Heart left ventricle (tissue), 16 donors: ENCODE measurements at regions of chr5 and their contacts with region 1.

Region 1: DNA sequence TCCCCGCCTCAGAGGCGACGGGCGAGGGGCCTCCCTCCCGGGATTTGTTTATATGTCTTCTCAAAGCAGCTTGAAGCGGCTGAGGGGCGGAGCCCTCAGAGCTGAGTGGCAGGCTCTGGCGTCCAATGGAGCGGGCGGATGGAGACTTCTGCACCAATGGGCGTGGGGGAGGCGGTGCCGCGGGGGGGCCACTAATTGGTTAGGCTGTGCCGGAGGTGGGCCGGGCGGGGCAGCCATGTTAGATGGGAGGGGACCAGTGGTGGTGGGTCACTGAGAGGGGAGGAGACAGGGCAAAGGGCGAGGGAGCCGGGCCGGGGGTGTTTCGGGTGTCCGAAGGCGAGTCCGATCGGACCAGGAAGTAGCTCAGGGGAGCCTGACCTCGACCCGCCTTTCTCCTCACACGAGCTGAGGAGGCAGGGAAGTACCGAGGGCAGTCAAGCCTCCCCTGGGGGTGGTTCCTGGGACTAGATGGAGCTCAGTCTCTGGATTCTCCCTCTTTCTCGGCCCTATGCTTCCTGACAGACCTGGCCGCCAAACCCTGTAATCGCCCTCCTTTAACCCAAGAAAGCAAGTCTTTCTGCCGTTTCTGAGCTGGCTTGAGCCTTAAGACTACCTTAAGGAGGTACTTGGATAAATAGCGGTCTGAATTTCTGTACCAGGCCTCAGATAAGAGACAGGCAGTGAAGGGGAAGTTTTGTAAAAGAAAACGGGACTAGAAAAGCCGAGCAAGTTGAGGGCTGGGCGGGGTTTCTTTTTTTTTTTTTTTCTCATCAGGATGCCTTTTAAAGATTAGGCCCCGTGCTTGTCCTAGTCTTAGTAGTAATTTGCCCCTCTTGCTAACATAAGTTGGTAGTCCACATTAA is 1.1 kb downstream of the CREBRF start:
- DNase-seq: peak; percentile 98 to 100 (median 99)
- ATAC-seq: peak; percentile 97 to 98 (median 98)
- H3K4me3 ChIP-seq: peak overlapping the region; percentile 68 to 100 (median 97)
- H3K27ac ChIP-seq: peak overlapping the region; percentile 86 to 99 (median 96)
- H3K4me1 ChIP-seq: peaks cover 6 to 46% (median 35%) of the 10 kb centered on the region in 12 donors
- H3K27me3 ChIP-seq: no peaks in the 10 kb centered on the region
- CTCF ChIP-seq: peak in 3 of 12 donors; percentile 6 to 38 (median 25)
- POLR2A ChIP-seq: peak in 1 of 2 donors; percentile 59

Region 2: DNA sequence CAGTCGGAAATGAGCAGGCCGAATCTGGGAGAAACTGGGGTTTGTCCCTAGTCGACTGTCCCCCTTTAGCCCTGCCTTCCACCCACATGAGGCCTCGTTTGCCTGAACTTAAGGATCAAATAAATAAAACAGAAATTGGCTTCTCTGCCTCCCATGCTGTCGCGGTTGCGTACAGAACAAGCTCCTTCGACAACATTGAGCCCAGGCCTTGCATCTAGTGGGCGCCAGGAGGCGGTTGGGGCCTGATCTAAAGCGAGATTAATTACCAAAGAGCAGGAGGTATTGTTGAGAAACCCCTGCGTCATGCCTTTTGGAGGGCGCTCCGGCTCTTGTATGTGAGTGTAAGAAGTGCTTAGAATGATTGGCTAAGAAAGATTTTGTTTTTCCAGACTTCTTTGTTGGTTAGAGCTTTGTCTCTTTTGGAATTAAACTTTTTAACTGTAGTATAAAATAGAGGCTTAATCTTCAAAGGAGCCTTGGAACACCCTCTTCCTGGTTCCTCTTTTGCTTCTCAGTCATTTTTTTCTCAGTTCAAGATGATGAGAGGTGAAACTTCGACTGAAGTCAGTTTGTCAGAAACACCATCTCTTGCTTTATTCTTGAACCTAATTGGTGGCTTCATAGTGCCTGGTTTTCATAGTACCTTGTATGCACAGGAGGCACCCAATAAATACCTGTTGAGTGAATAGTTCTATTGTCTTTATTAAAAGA is 72.9 kb before region 1 on chr5:
- intact Hi-C with region 1: loop called in 4 of 10 experiments (anchors 2 to 5 kb)
- DNase-seq: peak in 4 of 5 donors; percentile 51 to 66 (median 56)
- ATAC-seq: peak; percentile 13 to 72 (median 60)
- H3K4me3 ChIP-seq: peak overlapping the region; percentile 71 to 99 (median 88)
- H3K27ac ChIP-seq: peak overlapping the region; percentile 81 to 98 (median 94)
- H3K4me1 ChIP-seq: peaks cover 0 to 53% (median 16%) of the 10 kb centered on the region in 12 donors
- H3K27me3 ChIP-seq: no peaks in the 10 kb centered on the region
- CTCF ChIP-seq: peak in 10 of 12 donors; percentile 6 to 44 (median 30)
- POLR2A ChIP-seq: no peak

Region 3: GRCh38 chr5:173010547-173011464 is 46.5 kb before region 1 on chr5:
- intact Hi-C with region 1: loop called in 2 of 10 experiments (anchors 5 kb)
- DNase-seq: peak; percentile 63 to 72 (median 70)
- ATAC-seq: peak; percentile 82 to 92 (median 88)
- H3K4me3 ChIP-seq: no peak overlapping the region
- H3K27ac ChIP-seq: peak overlapping the region in 3 of 12 donors; percentile 26 to 68 (median 44)
- H3K4me1 ChIP-seq: peaks cover 0 to 90% (median 32%) of the 10 kb centered on the region in 12 donors
- H3K27me3 ChIP-seq: no peaks in the 10 kb centered on the region
- CTCF ChIP-seq: peak; percentile 43 to 75 (median 64)
- POLR2A ChIP-seq: no peak

Region 4: DNA sequence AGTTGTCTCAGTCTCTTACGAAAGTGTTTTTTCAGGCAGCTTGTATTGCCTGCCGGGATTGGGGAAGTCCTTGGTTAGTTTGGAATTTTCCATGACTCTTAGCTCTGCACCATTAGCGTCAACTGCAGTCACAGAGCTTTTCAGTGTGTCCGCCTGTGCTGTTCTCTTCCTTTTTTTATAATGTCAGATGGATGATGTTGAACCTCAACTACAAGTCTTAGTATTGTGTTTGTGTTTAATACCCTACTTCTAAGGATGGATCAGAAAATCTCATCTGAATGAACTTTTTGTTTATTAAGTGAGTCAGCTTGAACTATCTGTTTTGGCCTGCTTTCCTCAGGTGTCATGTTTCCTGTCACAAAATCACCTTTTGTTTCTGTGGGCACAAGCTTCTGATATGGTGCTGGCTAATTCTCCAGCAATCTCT is 40.7 kb before region 1 on chr5:
- intact Hi-C with region 1: loop called in 2 of 10 experiments (anchors 5 kb)
- DNase-seq: peak in 3 of 5 donors; percentile 36 to 50 (median 41)
- ATAC-seq: peak; percentile 66 to 87 (median 86)
- H3K4me3 ChIP-seq: peak overlapping the region in 2 of 12 donors; percentile 2 to 17
- H3K27ac ChIP-seq: peak overlapping the region in 11 of 12 donors; percentile 46 to 88 (median 78)
- H3K4me1 ChIP-seq: peaks cover 5 to 81% (median 34%) of the 10 kb centered on the region in 12 donors
- H3K27me3 ChIP-seq: no peaks in the 10 kb centered on the region
- CTCF ChIP-seq: no peak
- POLR2A ChIP-seq: no peak

Region 5: GRCh38 chr5:173238312-173239232 is 181.3 kb after region 1 on chr5:
- intact Hi-C with region 1: no loop called
- DNase-seq: peak in 1 of 5 donors; percentile 29
- ATAC-seq: no peak
- H3K4me3 ChIP-seq: peak overlapping the region; percentile 32 to 62 (median 46)
- H3K27ac ChIP-seq: peak overlapping the region; percentile 33 to 95 (median 85)
- H3K4me1 ChIP-seq: peaks cover 0 to 50% (median 16%) of the 10 kb centered on the region in 12 donors
- H3K27me3 ChIP-seq: peaks cover 16 to 99% (median 68%) of the 10 kb centered on the region in 9 donors
- CTCF ChIP-seq: no peak
- POLR2A ChIP-seq: no peak